ENCODE measurements at regions of chr17 and their contacts with region 1.

Region 1: GRCh38 chr17:59199398-59199797 is 10.4 kb upstream of the SMG8 start:
- DNase-seq: no peak
- ATAC-seq: no peak
- H3K4me3 ChIP-seq: no peak overlapping the region
- H3K27ac ChIP-seq: no peak overlapping the region
- H3K4me1 ChIP-seq: no peaks in the 10 kb centered on the region
- H3K27me3 ChIP-seq: no peaks in the 10 kb centered on the region
- CTCF ChIP-seq: no peak
- POLR2A ChIP-seq: no peak
- RAD21 ChIP-seq: no peak

Region 2: GRCh38 chr17:59234631-59235030 is 35.2 kb after region 1 on chr17:
- CTCF ChIA-PET with region 1: no interaction called
- POLR2A ChIA-PET with region 1: interaction called, 19 read pairs
- dilution Hi-C with region 1: no loop called
- in situ Hi-C with region 1: no loop called
- intact Hi-C with region 1: no loop called
- DNase-seq: no peak
- ATAC-seq: no peak
- H3K4me3 ChIP-seq: no peak overlapping the region
- H3K27ac ChIP-seq: no peak overlapping the region
- H3K4me1 ChIP-seq: no peaks in the 10 kb centered on the region
- H3K27me3 ChIP-seq: no peaks in the 10 kb centered on the region
- CTCF ChIP-seq: no peak
- POLR2A ChIP-seq: no peak
- RAD21 ChIP-seq: no peak

Region 3: GRCh38 chr17:59287452-59287851 is 88.1 kb after region 1 on chr17:
- CTCF ChIA-PET with region 1: no interaction called
- POLR2A ChIA-PET with region 1: no interaction called
- dilution Hi-C with region 1: no loop called
- in situ Hi-C with region 1: no loop called
- intact Hi-C with region 1: no loop called
- DNase-seq: peak; percentile 19
- ATAC-seq: no peak
- H3K4me3 ChIP-seq: no peak overlapping the region
- H3K27ac ChIP-seq: no peak overlapping the region
- H3K4me1 ChIP-seq: no peaks in the 10 kb centered on the region
- H3K27me3 ChIP-seq: no peaks in the 10 kb centered on the region; the same call in 1 of the 2 replicates
- CTCF ChIP-seq: no peak
- POLR2A ChIP-seq: no peak
- RAD21 ChIP-seq: no peak

Measured in IMR-90 (cell line).